HepG2 (cell line): ENCODE measurements at regions of chrX and their contacts with region 1.

Region 1: GRCh38 chrX:48957827-48958634 is 624 bp upstream of the OTUD5 start:
- DNase-seq: peak; percentile 93
- ATAC-seq: peak; percentile 88
- H3K4me3 ChIP-seq: peak overlapping the region; percentile 62 to 81 (median 76); a peak in 5 of 6 replicates
- H3K27ac ChIP-seq: peak overlapping the region; percentile 98
- H3K4me1 ChIP-seq: peaks cover 67% of the 10 kb centered on the region
- H3K27me3 ChIP-seq: no peaks in the 10 kb centered on the region
- CTCF ChIP-seq: no peak
- EP300 ChIP-seq: no peak; a peak in 1 of 4 replicates
- POLR2A ChIP-seq: peak in 1 of 2 experiments; percentile 67; a peak in 2 of 4 replicates
- RAD21 ChIP-seq: no peak

Region 2: DNA sequence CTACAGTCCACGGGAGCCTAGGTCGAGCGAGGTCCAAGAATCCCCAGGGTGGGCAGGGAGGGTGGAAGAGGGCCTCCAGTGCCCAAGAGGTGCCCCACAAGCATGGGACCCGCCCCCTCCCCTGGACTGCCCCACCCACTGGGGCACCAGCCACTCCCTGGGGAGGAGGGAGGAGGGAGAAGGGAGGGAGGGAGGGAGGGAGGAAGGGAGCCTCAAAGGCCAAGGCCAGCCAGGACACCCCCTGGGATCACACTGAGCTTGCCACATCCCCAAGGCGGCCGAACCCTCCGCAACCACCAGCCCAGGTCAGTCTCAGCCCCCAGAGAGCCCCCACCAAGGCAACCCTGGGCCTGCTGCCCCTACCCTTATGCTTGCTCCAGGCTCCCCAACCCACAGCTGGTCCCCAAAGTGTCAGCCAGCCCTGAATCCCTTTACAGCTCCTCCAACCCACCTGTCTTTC is 171.7 kb before region 1 on chrX and contains the start of gene GATA1:
- CTCF ChIA-PET with region 1: no interaction called
- POLR2A ChIA-PET with region 1: no interaction called
- in situ Hi-C with region 1: no loop called
- intact Hi-C with region 1: no loop called
- DNase-seq: no peak
- ATAC-seq: no peak
- H3K4me3 ChIP-seq: no peak within 1 kb of the TSS
- H3K27ac ChIP-seq: no peak within 1 kb of the TSS
- H3K4me1 ChIP-seq: no peaks in the 10 kb centered on the region
- H3K27me3 ChIP-seq: no peaks in the 10 kb centered on the region; a peak in 1 of 5 replicates
- CTCF ChIP-seq: no peak
- EP300 ChIP-seq: no peak
- POLR2A ChIP-seq: no peak
- RAD21 ChIP-seq: no peak
- total RNA-seq, gene GATA1: 0.13 TPM in 1 of 2 replicates, not detected in the other

Region 3: GRCh38 chrX:48891402-48892288 is 66.4 kb before region 1 on chrX:
- CTCF ChIA-PET with region 1: no interaction called
- POLR2A ChIA-PET with region 1: interaction called, 11 read pairs
- in situ Hi-C with region 1: no loop called
- intact Hi-C with region 1: no loop called
- DNase-seq: peak; percentile 76
- ATAC-seq: peak; percentile 91
- H3K4me3 ChIP-seq: peak overlapping the region; percentile 45 to 69 (median 64); a peak in 5 of 6 replicates
- H3K27ac ChIP-seq: peak overlapping the region; percentile 56
- H3K4me1 ChIP-seq: peaks cover 28% of the 10 kb centered on the region
- H3K27me3 ChIP-seq: no peaks in the 10 kb centered on the region
- CTCF ChIP-seq: peak; percentile 83
- EP300 ChIP-seq: no peak
- POLR2A ChIP-seq: no peak
- RAD21 ChIP-seq: peak; percentile 54

Region 4: GRCh38 chrX:49002091-49002935 is 44.3 kb after region 1 on chrX and contains the start of gene GRIPAP1:
- CTCF ChIA-PET with region 1: no interaction called
- POLR2A ChIA-PET with region 1: interaction called, 11 read pairs
- in situ Hi-C with region 1: no loop called
- intact Hi-C with region 1: loop called (anchors 1 kb)
- DNase-seq: peak; percentile 73
- ATAC-seq: peak; percentile 85
- H3K4me3 ChIP-seq: peak within 1 kb of the TSS; percentile 64 to 86 (median 75)
- H3K27ac ChIP-seq: peak within 1 kb of the TSS; percentile 99
- H3K4me1 ChIP-seq: peaks cover 18% of the 10 kb centered on the region
- H3K27me3 ChIP-seq: no peaks in the 10 kb centered on the region
- CTCF ChIP-seq: no peak
- EP300 ChIP-seq: no peak
- POLR2A ChIP-seq: peak in 1 of 2 experiments; percentile 73; a peak in 3 of 4 replicates
- RAD21 ChIP-seq: no peak
- total RNA-seq, gene GRIPAP1: 15.0 and 16.1 TPM in 2 replicates

Region 5: GRCh38 chrX:49878834-49879659 is 921.0 kb after region 1 on chrX and contains the start of gene USP27X:
- CTCF ChIA-PET with region 1: no interaction called
- POLR2A ChIA-PET with region 1: no interaction called
- in situ Hi-C with region 1: no loop called
- intact Hi-C with region 1: loop called (anchors 5 kb)
- DNase-seq: peak; percentile 86
- ATAC-seq: peak; percentile 72
- H3K4me3 ChIP-seq: peak within 1 kb of the TSS; percentile 52 to 76 (median 71)
- H3K27ac ChIP-seq: peak within 1 kb of the TSS; percentile 97
- H3K4me1 ChIP-seq: peaks cover 64% of the 10 kb centered on the region
- H3K27me3 ChIP-seq: no peaks in the 10 kb centered on the region; a peak in 1 of 5 replicates
- CTCF ChIP-seq: peak; percentile 60
- EP300 ChIP-seq: no peak
- POLR2A ChIP-seq: peak in 1 of 2 experiments; percentile 60; a peak in 1 of 4 replicates
- RAD21 ChIP-seq: peak; percentile 18; the same call in 1 of the 2 replicates
- total RNA-seq, gene USP27X: 7.2 and 7.5 TPM in 2 replicates